Activated CD4-positive, alpha-beta T cell treated with anti-CD3 and anti-CD28 coated beads for 36 hours (primary cell): ENCODE measurements at regions of chr11 and their contacts with region 1.

Region 1: DNA sequence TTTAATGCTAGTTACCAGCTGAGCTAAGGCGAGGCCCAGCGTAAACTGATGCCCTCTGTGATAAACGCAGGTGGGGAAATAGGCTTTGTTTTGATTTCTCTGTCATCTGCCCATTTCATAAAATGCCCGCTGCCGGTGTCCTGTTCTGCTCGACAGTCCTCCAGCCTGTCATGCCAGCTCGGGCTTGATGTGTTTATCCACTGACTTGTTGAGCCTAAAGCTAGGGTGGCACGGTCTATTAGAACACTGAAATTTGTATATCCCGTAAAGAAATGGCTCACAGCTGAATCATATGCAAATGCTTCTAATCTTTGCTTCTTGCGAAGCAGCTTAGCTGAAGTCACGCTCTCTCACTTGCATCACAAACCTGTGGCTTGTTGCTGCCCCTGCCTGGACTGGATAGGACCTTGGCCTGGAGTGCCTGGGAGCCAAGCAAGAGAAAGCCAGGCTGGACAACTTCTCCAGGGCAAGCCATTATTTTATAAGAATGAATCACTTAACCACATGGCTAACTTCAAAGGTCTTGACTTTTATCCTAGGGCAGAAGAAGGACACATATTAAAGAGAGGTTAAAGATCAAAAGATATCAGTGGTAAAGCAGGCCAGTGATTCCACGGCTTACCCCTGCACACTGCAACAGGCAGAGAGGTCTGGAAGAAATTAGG is 33.1 kb downstream of the EHF start:
- DNase-seq: peak; percentile 46
- ATAC-seq: peak; percentile 39
- H3K4me3 Mint-ChIP-seq: no peak overlapping the region
- H3K27ac Mint-ChIP-seq: peak overlapping the region; percentile 13
- H3K4me1 Mint-ChIP-seq: peaks cover 55% of the 10 kb centered on the region
- H3K27me3 Mint-ChIP-seq: peaks cover 34% of the 10 kb centered on the region

Region 2: DNA sequence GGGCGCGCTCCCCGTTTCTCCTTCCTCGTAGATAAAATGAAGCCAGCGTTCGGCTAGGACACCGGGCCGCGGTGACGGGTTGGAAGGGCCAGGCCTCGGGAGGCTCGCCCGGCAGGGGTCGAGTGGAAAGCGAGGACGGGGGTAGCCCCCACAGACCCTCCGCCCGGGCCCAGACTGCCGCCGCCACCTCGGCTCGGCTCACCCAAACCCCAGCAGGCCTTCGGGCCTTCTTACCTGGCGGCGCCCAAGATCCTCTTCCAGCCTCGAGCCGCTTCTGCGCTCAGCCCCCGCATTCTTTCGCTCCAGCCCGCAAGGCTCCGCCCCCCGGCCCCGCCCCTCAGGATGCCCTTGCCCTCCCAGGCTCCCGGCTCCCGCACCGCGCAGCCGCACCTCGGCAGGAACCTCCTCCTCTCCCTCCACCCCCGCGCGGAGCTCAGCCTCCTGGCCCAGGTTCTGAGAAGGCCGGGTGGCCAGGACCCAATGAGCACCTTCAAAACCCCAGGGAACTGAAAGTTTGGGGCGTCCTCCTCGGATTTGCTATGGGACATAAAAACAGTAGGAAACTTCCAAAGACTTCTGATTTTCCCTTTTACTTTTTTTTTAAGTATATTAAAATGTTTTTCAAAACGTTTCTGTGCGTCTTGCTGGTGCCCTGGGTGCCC is 917.7 kb before region 1 on chr11 and contains the start of gene CD59:
- CTCF ChIA-PET with region 1: no interaction called
- POLR2A ChIA-PET with region 1: no interaction called
- intact Hi-C with region 1: loop called in 1 of 2 experiments (anchors 10 kb)
- DNase-seq: peak; percentile 95
- ATAC-seq: peak; percentile 74
- H3K4me3 Mint-ChIP-seq: peak within 1 kb of the TSS; percentile 82
- H3K27ac Mint-ChIP-seq: peak within 1 kb of the TSS; percentile 84
- H3K4me1 Mint-ChIP-seq: peaks cover 44% of the 10 kb centered on the region
- H3K27me3 Mint-ChIP-seq: peaks cover 16% of the 10 kb centered on the region
- total RNA-seq, gene CD59: 58.2 to 60.0 TPM

Region 3: GRCh38 chr11:34250732-34251639 is 403.0 kb before region 1 on chr11:
- CTCF ChIA-PET with region 1: no interaction called
- POLR2A ChIA-PET with region 1: no interaction called
- intact Hi-C with region 1: loop called in 1 of 2 experiments (anchors 2 kb)
- DNase-seq: peak; percentile 86
- ATAC-seq: peak; percentile 98
- H3K4me3 Mint-ChIP-seq: no peak overlapping the region
- H3K27ac Mint-ChIP-seq: no peak overlapping the region
- H3K4me1 Mint-ChIP-seq: peaks cover 60% of the 10 kb centered on the region
- H3K27me3 Mint-ChIP-seq: peaks cover 20% of the 10 kb centered on the region

Region 4: GRCh38 chr11:34438529-34439507 is 215.1 kb before region 1 on chr11 and contains the start of gene CAT:
- CTCF ChIA-PET with region 1: no interaction called
- POLR2A ChIA-PET with region 1: no interaction called
- intact Hi-C with region 1: loop called in 1 of 2 experiments (anchors 5 kb)
- DNase-seq: peak; percentile 99
- ATAC-seq: peak; percentile 99
- H3K4me3 Mint-ChIP-seq: peak within 1 kb of the TSS; percentile 86
- H3K27ac Mint-ChIP-seq: peak within 1 kb of the TSS; percentile 93
- H3K4me1 Mint-ChIP-seq: peaks cover 22% of the 10 kb centered on the region
- H3K27me3 Mint-ChIP-seq: no peaks in the 10 kb centered on the region
- total RNA-seq, gene CAT: 25.1 to 25.5 TPM

Region 5: DNA sequence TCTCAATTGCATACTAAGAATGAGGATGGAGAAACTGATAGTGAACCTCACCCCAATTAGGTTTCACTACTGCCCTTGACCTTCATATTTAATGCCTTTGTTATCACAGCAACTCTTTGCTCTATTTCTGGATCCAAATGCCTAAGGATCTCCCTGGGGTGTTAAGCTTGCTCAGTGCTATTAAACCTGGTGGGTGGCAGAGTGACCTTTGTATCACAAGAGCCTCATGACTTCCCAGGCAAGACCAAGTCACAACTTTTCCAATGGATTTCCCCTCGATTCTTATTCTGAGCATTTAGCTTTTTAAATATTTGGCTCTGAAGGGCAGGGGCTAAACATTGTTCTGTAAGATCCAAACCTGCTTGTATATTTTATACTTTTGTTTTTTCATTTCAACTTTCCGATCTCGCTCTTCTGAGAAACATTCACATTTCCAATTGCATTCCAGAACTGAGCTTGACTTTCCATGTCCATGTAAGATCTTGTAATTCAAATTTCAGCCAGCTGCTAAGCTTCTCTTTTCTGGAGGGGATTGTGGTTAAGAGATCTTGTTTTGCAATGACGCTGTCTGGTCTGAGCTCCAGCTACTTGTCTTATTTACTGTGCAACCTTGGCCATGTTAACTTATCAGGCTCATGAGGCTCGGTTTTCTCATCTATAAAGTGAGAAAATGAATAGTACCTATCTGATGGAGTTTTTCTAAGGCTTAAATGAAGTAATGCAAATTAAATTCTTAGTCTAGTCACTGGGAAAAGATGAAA is 39.4 kb before region 1 on chr11:
- CTCF ChIA-PET with region 1: interaction called, 3 read pairs
- POLR2A ChIA-PET with region 1: interaction called, 5 read pairs
- intact Hi-C with region 1: loop called (anchors 1 to 2 kb)
- DNase-seq: no peak
- ATAC-seq: peak; percentile 42
- H3K4me3 Mint-ChIP-seq: no peak overlapping the region
- H3K27ac Mint-ChIP-seq: no peak overlapping the region
- H3K4me1 Mint-ChIP-seq: peaks cover 18% of the 10 kb centered on the region
- H3K27me3 Mint-ChIP-seq: peaks cover 13% of the 10 kb centered on the region

Region 6: GRCh38 chr11:34783816-34784317 is 129.9 kb after region 1 on chr11:
- CTCF ChIA-PET with region 1: no interaction called
- POLR2A ChIA-PET with region 1: no interaction called
- intact Hi-C with region 1: no loop called
- DNase-seq: no peak
- ATAC-seq: no peak
- H3K4me3 Mint-ChIP-seq: no peak overlapping the region
- H3K27ac Mint-ChIP-seq: no peak overlapping the region
- H3K4me1 Mint-ChIP-seq: no peaks in the 10 kb centered on the region
- H3K27me3 Mint-ChIP-seq: peaks cover 23% of the 10 kb centered on the region

Region 7: DNA sequence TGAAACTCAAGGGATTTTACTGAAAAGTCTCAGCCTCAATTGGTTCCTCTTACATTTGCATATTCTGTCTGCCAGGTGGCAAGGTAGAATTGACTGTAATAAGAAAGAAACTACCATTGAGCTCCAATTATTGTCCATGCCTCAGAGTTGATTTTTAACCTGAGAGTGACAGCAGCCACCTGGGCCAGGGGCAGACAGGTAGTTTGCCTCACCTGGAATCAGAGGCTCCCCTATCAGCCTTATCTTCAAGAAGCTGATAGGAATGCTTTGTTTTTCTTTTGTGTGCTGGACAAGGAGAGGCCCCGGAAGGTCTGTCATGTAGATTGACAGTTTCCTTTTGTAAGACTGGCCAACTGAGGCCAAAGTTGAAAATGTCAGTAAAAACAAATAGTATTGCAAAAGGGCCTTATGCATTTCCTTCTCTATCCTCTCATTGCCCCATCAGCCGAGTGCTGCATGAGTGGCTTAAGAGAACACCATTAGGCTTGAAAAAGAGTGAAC is 519.1 kb after region 1 on chr11:
- CTCF ChIA-PET with region 1: no interaction called
- POLR2A ChIA-PET with region 1: no interaction called
- intact Hi-C with region 1: loop called (anchors 5 to 10 kb)
- DNase-seq: no peak
- ATAC-seq: no peak
- H3K4me3 Mint-ChIP-seq: no peak overlapping the region
- H3K27ac Mint-ChIP-seq: peak overlapping the region; percentile 83
- H3K4me1 Mint-ChIP-seq: peaks cover 97% of the 10 kb centered on the region
- H3K27me3 Mint-ChIP-seq: no peaks in the 10 kb centered on the region

Region 8: GRCh38 chr11:36354221-36355003 is 1700.5 kb after region 1 on chr11:
- CTCF ChIA-PET with region 1: no interaction called
- POLR2A ChIA-PET with region 1: no interaction called
- intact Hi-C with region 1: loop called in 1 of 2 experiments (anchors 5 kb)
- DNase-seq: no peak
- ATAC-seq: peak; percentile 54
- H3K4me3 Mint-ChIP-seq: peak overlapping the region; percentile 28
- H3K27ac Mint-ChIP-seq: peak overlapping the region; percentile 77
- H3K4me1 Mint-ChIP-seq: peaks cover 73% of the 10 kb centered on the region
- H3K27me3 Mint-ChIP-seq: peaks cover 6% of the 10 kb centered on the region